A549 (cell line): ENCODE measurements at regions of chr4 and their contacts with region 1.

Region 1: GRCh38 chr4:57037982-57038604 is 59.4 kb downstream of the POLR2B start:
- DNase-seq: peak; percentile 25 to 56
- ATAC-seq: peak; percentile 85 to 86; a peak in 5 of 6 replicates
- H3K4me3 ChIP-seq: no peak overlapping the region
- H3K27ac ChIP-seq: peak overlapping the region; percentile 62 to 73
- H3K4me1 ChIP-seq: peaks cover 38% of the 10 kb centered on the region
- CTCF ChIP-seq: peak; percentile 70
- EP300 ChIP-seq: no peak
- POLR2A ChIP-seq: no peak
- RAD21 ChIP-seq: peak; percentile 86 to 92

Region 2: DNA sequence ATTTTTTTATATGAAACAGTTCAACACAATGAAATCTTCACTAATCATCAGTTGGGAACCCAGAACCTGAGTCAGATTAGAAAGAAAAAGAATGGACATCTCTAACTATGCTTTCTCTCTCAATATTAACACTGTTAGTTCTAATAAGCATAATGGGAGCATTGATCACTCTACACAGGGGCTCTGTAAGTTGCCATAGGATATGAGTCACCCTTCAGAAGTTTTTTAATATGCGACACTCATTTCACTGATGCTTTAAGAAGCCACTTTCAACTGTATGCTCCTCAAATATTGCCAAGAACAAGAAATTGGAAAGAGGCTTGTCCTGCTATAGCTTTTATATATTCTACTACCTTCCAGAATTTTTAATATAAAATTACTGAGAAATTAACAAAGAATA is 837.8 kb before region 1 on chr4:
- CTCF ChIA-PET with region 1: no interaction called
- POLR2A ChIA-PET with region 1: no interaction called
- DNase-seq: no peak
- ATAC-seq: no peak
- H3K4me3 ChIP-seq: no peak overlapping the region
- H3K27ac ChIP-seq: no peak overlapping the region
- H3K4me1 ChIP-seq: no peaks in the 10 kb centered on the region
- CTCF ChIP-seq: no peak
- EP300 ChIP-seq: no peak
- POLR2A ChIP-seq: no peak
- RAD21 ChIP-seq: no peak

Region 3: DNA sequence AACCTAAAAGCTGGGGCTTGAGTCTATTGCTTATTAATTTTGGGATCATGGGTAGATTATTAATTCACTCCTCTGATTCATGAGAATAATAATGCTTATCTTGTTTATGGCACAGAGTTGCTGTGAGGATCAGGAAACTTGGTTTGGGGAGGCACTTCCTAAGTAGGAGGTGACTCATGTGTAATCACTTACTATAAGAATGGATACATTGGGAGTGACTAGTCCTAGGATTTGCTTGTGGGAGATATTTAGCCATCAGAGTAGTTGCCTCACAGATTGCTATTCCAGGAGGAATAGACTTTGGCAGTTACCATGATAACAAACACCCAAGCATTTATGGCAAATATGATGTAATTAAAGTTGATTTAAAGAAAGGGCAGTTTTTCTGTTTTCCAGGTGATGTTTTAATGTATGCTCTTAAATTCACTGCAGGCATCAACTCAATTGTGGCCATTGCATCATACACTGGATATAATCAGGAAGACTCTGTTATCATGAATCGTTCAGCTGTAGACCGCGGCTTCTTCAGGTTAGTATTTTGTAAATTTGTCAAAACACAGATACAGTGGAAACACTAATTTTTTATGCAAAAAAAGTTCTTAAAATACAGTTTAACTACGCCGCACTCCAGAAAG is 17.5 kb before region 1 on chr4:
- CTCF ChIA-PET with region 1: interaction called, 20 read pairs
- POLR2A ChIA-PET with region 1: no interaction called
- DNase-seq: peak in 1 of 2 experiments; percentile 17
- ATAC-seq: peak; percentile 59 to 63; a peak in 5 of 6 replicates
- H3K4me3 ChIP-seq: no peak overlapping the region
- H3K27ac ChIP-seq: no peak overlapping the region
- H3K4me1 ChIP-seq: peaks cover 9% of the 10 kb centered on the region; the same call in 2 of the 3 replicates
- CTCF ChIP-seq: no peak
- EP300 ChIP-seq: no peak
- POLR2A ChIP-seq: no peak
- RAD21 ChIP-seq: no peak

Region 4: DNA sequence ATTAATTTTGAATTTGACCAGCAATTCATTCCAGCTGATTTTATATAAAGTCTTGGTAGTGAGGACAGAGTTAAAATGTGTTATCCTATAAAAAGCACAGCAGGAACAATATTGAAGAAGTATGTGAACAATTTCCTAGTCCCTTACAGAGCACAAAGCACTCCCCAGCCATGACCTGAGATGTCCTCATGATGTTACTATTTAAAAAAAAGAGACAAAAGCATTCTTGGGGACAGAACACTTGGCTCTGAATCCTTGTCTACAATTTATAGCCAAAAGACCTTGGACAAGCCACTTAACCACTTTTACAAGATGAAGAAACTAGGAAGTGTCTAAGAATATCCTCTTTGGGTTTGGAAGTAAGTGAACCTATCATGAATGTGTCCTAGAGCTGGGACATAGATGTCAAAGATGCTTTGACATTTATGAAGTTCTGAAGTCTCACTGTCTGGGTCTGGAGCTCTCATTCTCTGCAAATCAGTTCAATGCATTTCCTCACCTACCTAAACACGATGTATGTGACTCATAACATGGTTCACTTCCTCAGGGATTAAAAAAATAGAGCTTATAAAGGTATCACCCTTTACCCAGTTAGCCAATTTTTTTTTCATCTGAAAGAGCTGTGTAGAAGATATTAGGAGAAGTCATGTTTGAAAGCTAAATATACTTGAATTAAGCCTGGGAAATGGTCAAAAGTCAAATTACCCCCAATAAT is 10.7 kb after region 1 on chr4:
- CTCF ChIA-PET with region 1: interaction called, 23 read pairs
- POLR2A ChIA-PET with region 1: no interaction called
- DNase-seq: no peak
- ATAC-seq: no peak
- H3K4me3 ChIP-seq: no peak overlapping the region
- H3K27ac ChIP-seq: peak overlapping the region in 1 of 2 experiments; percentile 27; a peak in 1 of 6 replicates
- H3K4me1 ChIP-seq: peaks cover 51% of the 10 kb centered on the region
- CTCF ChIP-seq: no peak
- EP300 ChIP-seq: no peak
- POLR2A ChIP-seq: no peak
- RAD21 ChIP-seq: no peak

Region 5: GRCh38 chr4:57064811-57065711 is 27.0 kb after region 1 on chr4:
- CTCF ChIA-PET with region 1: interaction called, 24 read pairs
- POLR2A ChIA-PET with region 1: no interaction called
- DNase-seq: peak; percentile 41 to 83
- ATAC-seq: peak; percentile 83 to 86
- H3K4me3 ChIP-seq: peak overlapping the region; percentile 22; the same call in 2 of the 3 replicates
- H3K27ac ChIP-seq: peak overlapping the region; percentile 84 to 88
- H3K4me1 ChIP-seq: peaks cover 85% of the 10 kb centered on the region
- CTCF ChIP-seq: no peak
- EP300 ChIP-seq: peak; percentile 55 to 78; a peak in 2 of 5 replicates
- POLR2A ChIP-seq: no peak
- RAD21 ChIP-seq: peak; percentile 25 to 31; a peak in 2 of 5 replicates